Activated T-helper 1 cell treated with anti-CD3 and anti-CD28 coated beads, Interleukin-12 subunit alpha, Interleukin-12 subunit beta, Interleukin-2, Interleukin-4 antibody, amounts not matched to agents 30 ng/mL and 10 ng/mL and 1 ng/mL, durations not matched to agents 14 hours and 24 hours and 36 hours (primary cell): ENCODE measurements at regions of chr5 and their contacts with region 1.

Region 1: DNA sequence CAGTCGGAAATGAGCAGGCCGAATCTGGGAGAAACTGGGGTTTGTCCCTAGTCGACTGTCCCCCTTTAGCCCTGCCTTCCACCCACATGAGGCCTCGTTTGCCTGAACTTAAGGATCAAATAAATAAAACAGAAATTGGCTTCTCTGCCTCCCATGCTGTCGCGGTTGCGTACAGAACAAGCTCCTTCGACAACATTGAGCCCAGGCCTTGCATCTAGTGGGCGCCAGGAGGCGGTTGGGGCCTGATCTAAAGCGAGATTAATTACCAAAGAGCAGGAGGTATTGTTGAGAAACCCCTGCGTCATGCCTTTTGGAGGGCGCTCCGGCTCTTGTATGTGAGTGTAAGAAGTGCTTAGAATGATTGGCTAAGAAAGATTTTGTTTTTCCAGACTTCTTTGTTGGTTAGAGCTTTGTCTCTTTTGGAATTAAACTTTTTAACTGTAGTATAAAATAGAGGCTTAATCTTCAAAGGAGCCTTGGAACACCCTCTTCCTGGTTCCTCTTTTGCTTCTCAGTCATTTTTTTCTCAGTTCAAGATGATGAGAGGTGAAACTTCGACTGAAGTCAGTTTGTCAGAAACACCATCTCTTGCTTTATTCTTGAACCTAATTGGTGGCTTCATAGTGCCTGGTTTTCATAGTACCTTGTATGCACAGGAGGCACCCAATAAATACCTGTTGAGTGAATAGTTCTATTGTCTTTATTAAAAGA is 827 bp downstream of the ATP6V0E1 start:
- DNase-seq: peak; percentile 60
- H3K4me3 Mint-ChIP-seq: peak overlapping the region; percentile 96
- H3K27ac Mint-ChIP-seq: peak overlapping the region; percentile 98
- H3K4me1 Mint-ChIP-seq: peaks cover 16% of the 10 kb centered on the region
- H3K27me3 Mint-ChIP-seq: no peaks in the 10 kb centered on the region

Region 2: DNA sequence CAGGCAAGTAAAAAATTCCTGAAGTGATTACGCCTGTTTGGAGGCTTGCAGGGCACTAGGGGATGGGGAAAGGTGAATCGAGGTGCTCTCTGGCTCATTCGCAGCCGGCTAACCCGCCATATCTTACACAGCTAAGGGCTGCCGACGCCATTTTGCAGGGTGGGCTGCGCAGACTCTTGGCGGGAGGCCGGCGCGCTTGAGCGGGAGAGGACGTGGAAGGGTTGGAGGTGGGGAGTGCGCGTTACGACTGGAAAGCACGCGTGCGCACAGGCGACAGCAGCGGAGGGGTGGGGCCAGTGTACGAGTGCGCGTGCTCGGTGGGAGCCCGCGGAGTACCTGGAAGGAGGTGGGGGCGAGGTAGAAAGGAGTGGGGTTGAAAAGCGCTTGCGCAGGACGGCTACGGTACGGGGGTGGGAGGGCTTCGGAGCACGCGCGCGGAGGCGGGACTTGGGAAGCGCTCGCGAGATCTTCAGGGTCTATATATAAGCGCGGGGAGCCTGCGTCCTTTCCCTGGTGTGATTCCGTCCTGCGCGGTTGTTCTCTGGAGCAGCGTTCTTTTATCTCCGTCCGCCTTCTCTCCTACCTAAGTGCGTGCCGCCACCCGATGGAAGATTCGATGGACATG is 1596.9 kb before region 1 on chr5 and contains the start of gene NPM1:
- intact Hi-C with region 1: loop called (anchors 5 kb)
- DNase-seq: peak; percentile 97
- H3K4me3 Mint-ChIP-seq: peak within 1 kb of the TSS; percentile 97
- H3K27ac Mint-ChIP-seq: peak within 1 kb of the TSS; percentile 98
- H3K4me1 Mint-ChIP-seq: peaks cover 43% of the 10 kb centered on the region
- H3K27me3 Mint-ChIP-seq: peaks cover 8% of the 10 kb centered on the region
- total RNA-seq, gene NPM1: 2,729 and 2,809 TPM in 2 replicates

Region 3: DNA sequence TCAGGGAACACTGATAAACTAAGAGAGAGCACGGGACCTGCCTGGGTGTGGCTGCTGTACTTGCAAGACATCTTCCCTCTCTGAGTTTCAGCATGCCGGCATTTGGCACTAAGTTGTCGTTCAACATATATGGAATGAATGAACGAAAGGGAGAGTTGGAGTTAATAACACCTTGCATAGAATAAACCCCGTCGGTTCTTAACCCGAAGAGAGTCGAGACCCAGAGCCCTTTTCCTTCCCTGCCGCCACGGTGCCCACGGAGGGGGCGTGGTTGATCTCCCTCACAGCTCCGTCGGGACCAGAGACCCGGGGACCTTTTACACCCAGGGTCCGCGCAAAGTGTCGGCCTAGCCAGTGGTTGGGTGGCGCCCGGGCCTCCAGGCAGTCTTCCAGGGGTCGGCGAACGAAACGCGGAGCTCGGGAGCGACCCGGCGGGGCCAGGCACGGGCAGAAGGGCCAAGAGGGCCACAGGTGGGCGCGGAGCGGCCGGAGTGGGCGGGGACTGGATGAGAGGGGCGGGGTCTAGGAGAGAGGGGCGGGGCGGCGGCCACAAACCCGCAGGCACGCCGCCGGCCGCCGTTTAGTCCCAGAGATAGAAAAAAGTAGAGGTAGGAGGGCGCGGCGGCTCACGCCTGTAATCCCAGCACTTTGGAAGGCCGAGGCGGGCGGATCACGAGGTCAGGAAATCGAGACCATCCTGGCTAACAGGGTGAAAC is 25.9 kb before region 1 on chr5:
- intact Hi-C with region 1: loop called (anchors 1 kb)
- DNase-seq: peak; percentile 51
- H3K4me3 Mint-ChIP-seq: peak overlapping the region; percentile 99
- H3K27ac Mint-ChIP-seq: peak overlapping the region; percentile 98
- H3K4me1 Mint-ChIP-seq: peaks cover 27% of the 10 kb centered on the region
- H3K27me3 Mint-ChIP-seq: peaks cover 6% of the 10 kb centered on the region

Region 4: DNA sequence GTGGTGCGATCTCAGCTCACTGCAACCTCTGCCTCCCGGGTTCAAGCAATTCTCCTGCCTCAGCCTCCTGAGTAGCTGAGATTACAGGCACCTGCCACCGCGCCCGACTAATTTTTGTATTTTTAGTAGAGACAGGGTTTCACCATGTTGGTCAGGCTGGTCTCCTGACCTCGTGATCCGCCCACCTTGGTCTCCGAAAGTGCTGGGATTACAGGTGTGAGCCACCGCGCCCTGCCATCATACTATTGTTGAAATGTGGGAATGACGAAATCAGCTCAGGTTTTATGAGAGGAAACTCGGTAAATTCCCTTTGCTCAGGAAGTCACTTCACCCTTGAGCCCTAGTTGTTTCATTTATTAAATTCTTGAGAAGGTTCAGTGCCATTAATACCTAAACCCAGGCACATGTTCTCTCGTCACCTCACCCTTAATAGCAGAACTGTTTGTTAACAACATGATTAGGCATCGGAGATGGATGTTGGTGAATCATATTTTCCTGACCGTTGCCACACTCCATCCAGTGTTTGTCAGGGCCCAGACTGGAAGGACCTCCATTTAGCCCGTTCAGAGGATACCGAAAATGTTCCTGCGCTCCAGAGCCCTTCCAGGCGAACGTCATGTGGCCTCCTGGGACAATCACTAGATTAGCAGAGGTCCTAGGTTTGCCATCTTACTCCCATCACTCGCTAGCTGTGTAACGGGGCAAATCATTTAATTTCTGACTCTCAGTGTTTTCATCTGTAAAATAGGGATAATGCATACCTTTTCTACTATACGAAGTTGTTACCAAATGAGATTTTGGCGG is 51.7 kb after region 1 on chr5:
- intact Hi-C with region 1: loop called (anchors 1 kb)
- DNase-seq: no peak
- H3K4me3 Mint-ChIP-seq: peak overlapping the region; percentile 77
- H3K27ac Mint-ChIP-seq: peak overlapping the region; percentile 92
- H3K4me1 Mint-ChIP-seq: peaks cover 54% of the 10 kb centered on the region
- H3K27me3 Mint-ChIP-seq: no peaks in the 10 kb centered on the region

Region 5: DNA sequence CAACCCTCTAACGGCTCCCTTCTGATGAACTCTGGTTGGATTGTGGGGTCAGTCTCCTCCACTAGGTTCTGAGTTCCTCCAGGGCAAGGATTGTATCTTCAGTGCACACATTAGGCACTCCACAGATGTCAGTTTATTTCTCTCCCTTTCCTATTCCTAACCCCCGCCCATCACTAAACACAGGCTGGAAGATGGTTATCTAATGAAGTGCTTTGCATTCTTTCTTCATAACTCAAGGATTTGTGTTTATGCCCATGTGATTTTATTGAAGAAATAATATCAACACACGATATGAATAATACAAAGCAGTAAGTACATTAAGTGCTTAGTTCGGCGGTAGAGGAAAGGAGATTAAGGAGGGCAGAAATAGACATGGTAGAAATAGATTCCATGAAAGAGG is 67.3 kb after region 1 on chr5:
- intact Hi-C with region 1: no loop called
- DNase-seq: no peak
- H3K4me3 Mint-ChIP-seq: no peak overlapping the region
- H3K27ac Mint-ChIP-seq: no peak overlapping the region
- H3K4me1 Mint-ChIP-seq: peaks cover 17% of the 10 kb centered on the region
- H3K27me3 Mint-ChIP-seq: peaks cover 5% of the 10 kb centered on the region

Region 6: GRCh38 chr5:173283318-173284288 is 299.2 kb after region 1 on chr5:
- intact Hi-C with region 1: loop called (anchors 2 kb)
- DNase-seq: peak; percentile 60
- H3K4me3 Mint-ChIP-seq: no peak overlapping the region
- H3K27ac Mint-ChIP-seq: no peak overlapping the region
- H3K4me1 Mint-ChIP-seq: no peaks in the 10 kb centered on the region
- H3K27me3 Mint-ChIP-seq: peaks cover 38% of the 10 kb centered on the region

Region 7: DNA sequence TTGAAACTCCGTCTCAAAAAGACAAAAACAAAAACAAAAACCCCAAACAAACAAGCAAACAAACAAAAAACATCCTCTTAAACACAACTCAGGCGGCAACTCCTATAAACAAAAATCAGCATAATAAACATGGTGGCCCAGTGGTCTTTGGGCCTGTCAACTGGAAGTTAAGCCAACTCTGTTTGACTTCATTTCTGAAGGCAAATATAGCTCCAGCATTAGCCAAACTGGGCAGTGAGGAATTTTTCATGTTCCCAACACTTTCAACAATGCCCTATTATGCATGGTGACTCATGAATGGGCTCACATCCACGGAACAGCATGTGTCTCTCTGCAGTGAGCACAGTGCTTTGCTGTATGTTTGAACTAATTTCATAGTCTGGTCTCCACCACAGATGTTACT is 487.7 kb after region 1 on chr5:
- intact Hi-C with region 1: no loop called
- DNase-seq: no peak
- H3K4me3 Mint-ChIP-seq: no peak overlapping the region
- H3K27ac Mint-ChIP-seq: no peak overlapping the region
- H3K4me1 Mint-ChIP-seq: no peaks in the 10 kb centered on the region
- H3K27me3 Mint-ChIP-seq: no peaks in the 10 kb centered on the region